Caco-2 (cell line): ENCODE measurements at regions of chr17 and their contacts with region 1.

Region 1: GRCh38 chr17:57892146-57892828 is 42.4 kb upstream of the MRPS23 start:
- DNase-seq: peak; percentile 89 to 93
- H3K4me3 ChIP-seq: no peak overlapping the region
- H3K4me3 Mint-ChIP-seq: peak overlapping the region; percentile 52
- H3K27ac Mint-ChIP-seq: peak overlapping the region; percentile 90
- H3K4me1 ChIP-seq: peaks cover 24% of the 10 kb centered on the region
- H3K4me1 Mint-ChIP-seq: peaks cover 21% of the 10 kb centered on the region
- H3K27me3 ChIP-seq: no peaks in the 10 kb centered on the region
- H3K27me3 Mint-ChIP-seq: no peaks in the 10 kb centered on the region
- CTCF ChIP-seq: peak; percentile 95 to 98

Region 2: GRCh38 chr17:57861000-57861789 is 31.1 kb before region 1 on chr17:
- CTCF ChIA-PET with region 1: interaction called, 14 read pairs
- POLR2A ChIA-PET with region 1: no interaction called
- intact Hi-C with region 1: no loop called
- DNase-seq: peak; percentile 76 to 79
- H3K4me3 ChIP-seq: peak overlapping the region; percentile 38
- H3K4me3 Mint-ChIP-seq: peak overlapping the region; percentile 95
- H3K27ac Mint-ChIP-seq: peak overlapping the region; percentile 84
- H3K4me1 ChIP-seq: peaks cover 20% of the 10 kb centered on the region
- H3K4me1 Mint-ChIP-seq: peaks cover 29% of the 10 kb centered on the region
- H3K27me3 ChIP-seq: no peaks in the 10 kb centered on the region
- H3K27me3 Mint-ChIP-seq: no peaks in the 10 kb centered on the region
- CTCF ChIP-seq: no peak

Region 3: DNA sequence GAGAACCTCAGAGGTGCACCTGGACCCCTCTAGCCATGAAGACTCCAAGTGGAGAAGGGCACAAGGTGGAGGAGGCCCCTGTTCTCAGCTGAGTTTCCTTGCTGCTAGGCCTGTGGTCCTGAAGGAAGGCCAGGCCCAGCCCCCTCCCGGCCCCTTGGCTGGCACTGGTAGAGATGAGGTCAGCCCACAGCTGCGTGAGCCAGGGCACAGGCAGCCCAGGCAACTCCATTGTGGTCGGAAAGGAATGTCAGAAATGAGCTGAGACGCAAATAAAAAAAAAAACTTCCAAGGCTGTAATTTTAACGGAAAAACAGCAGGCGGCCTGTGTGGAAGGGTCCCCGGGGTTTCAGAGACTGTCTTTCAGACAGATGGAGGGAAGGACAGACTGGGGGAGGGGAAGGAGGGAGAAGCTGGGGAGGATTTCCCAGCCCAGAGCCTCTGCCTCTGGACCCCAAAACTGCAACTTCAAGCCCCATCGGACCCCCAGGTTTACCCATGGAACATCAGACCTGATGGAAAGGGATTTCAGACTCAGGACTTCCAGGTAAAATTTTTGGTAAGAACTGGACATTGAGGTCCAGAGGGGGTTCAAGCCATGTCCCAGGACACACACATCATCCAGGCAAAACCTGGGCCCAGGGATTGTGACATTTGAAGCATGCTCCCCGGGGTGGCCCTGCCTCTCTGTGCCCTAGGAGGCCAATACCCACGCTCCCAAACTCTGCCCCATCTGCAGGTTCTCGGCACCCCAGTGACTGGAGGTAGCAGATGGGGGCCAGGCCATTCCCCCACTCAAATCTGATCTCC is 16.8 kb before region 1 on chr17:
- CTCF ChIA-PET with region 1: interaction called, 10 read pairs
- POLR2A ChIA-PET with region 1: interaction called, 4 read pairs
- intact Hi-C with region 1: loop called (anchors 1 kb)
- DNase-seq: peak; percentile 72 to 76
- H3K4me3 ChIP-seq: no peak overlapping the region
- H3K4me3 Mint-ChIP-seq: no peak overlapping the region
- H3K27ac Mint-ChIP-seq: peak overlapping the region; percentile 89
- H3K4me1 ChIP-seq: peaks cover 34% of the 10 kb centered on the region
- H3K4me1 Mint-ChIP-seq: peaks cover 36% of the 10 kb centered on the region
- H3K27me3 ChIP-seq: no peaks in the 10 kb centered on the region
- H3K27me3 Mint-ChIP-seq: no peaks in the 10 kb centered on the region
- CTCF ChIP-seq: peak; percentile 33 to 36

Region 4: GRCh38 chr17:57902800-57903759 is 10.8 kb after region 1 on chr17:
- CTCF ChIA-PET with region 1: interaction called, 16 read pairs
- POLR2A ChIA-PET with region 1: interaction called, 12 read pairs
- intact Hi-C with region 1: loop called (anchors 1 kb)
- DNase-seq: peak; percentile 89 to 92
- H3K4me3 ChIP-seq: no peak overlapping the region
- H3K4me3 Mint-ChIP-seq: peak overlapping the region; percentile 49
- H3K27ac Mint-ChIP-seq: peak overlapping the region; percentile 87
- H3K4me1 ChIP-seq: peaks cover 74% of the 10 kb centered on the region
- H3K4me1 Mint-ChIP-seq: peaks cover 52% of the 10 kb centered on the region
- H3K27me3 ChIP-seq: no peaks in the 10 kb centered on the region
- H3K27me3 Mint-ChIP-seq: no peaks in the 10 kb centered on the region
- CTCF ChIP-seq: no peak

Region 5: GRCh38 chr17:57939797-57940196 is 47.5 kb after region 1 on chr17:
- CTCF ChIA-PET with region 1: interaction called, 8 read pairs
- POLR2A ChIA-PET with region 1: no interaction called
- intact Hi-C with region 1: loop called (anchors 2 kb)
- DNase-seq: no peak
- H3K4me3 ChIP-seq: no peak overlapping the region
- H3K4me3 Mint-ChIP-seq: no peak overlapping the region
- H3K27ac Mint-ChIP-seq: no peak overlapping the region
- H3K4me1 ChIP-seq: peaks cover 26% of the 10 kb centered on the region
- H3K4me1 Mint-ChIP-seq: peaks cover 49% of the 10 kb centered on the region
- H3K27me3 ChIP-seq: no peaks in the 10 kb centered on the region
- H3K27me3 Mint-ChIP-seq: no peaks in the 10 kb centered on the region
- CTCF ChIP-seq: no peak

Region 6: DNA sequence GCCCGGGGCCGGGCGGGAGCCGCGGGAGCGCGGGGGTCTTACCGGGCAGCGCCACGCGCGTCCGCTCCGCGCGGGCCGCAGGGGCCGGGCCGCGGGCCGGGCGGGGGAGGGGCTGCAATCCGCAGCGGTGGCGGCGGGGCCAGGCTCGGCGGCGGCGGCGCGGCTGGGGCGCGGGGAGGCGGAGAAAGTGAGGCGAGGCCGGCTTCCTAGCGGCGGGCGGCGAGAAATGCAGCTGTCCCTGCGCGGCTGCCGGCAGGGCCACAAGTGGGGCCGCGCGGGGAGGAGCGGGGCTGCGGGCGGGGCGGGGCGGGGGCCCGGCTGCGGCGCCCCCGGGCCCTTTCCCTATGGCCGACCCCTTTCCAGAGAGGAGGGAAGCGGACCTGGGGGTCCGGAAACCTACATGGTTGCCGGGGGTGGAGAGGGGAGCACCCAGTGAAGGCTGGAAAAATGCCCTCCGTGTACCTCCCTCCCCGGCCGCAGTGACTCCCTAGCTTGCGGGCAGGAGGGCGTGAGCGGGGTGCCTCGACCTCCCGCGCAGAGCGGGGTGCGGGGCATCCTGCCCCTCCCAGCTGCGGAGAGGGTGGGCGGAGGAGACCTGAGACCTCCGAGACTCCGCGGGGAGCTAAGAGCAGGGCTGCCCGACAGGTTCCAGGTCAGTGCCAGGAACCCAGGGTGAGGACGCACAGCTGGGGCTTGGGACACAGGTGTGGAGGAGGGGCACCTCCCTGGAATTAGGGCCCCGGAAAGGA is 63.1 kb after region 1 on chr17 and contains the start of gene CUEDC1:
- CTCF ChIA-PET with region 1: interaction called, 10 read pairs
- POLR2A ChIA-PET with region 1: interaction called, 9 read pairs
- intact Hi-C with region 1: loop called (anchors 2 kb)
- DNase-seq: peak; percentile 76 to 90
- H3K4me3 ChIP-seq: peak within 1 kb of the TSS; percentile 69
- H3K4me3 Mint-ChIP-seq: peak within 1 kb of the TSS; percentile 72
- H3K27ac Mint-ChIP-seq: peak within 1 kb of the TSS; percentile 53
- H3K4me1 ChIP-seq: peaks cover 47% of the 10 kb centered on the region
- H3K4me1 Mint-ChIP-seq: peaks cover 36% of the 10 kb centered on the region
- H3K27me3 ChIP-seq: no peaks in the 10 kb centered on the region
- H3K27me3 Mint-ChIP-seq: no peaks in the 10 kb centered on the region
- CTCF ChIP-seq: peak; percentile 22 to 40
- total RNA-seq, gene CUEDC1: 27.5 TPM in 2 replicates

Region 7: GRCh38 chr17:57995076-57995956 is 103.0 kb after region 1 on chr17:
- CTCF ChIA-PET with region 1: interaction called, 13 read pairs
- POLR2A ChIA-PET with region 1: no interaction called
- intact Hi-C with region 1: loop called (anchors 1 kb)
- DNase-seq: peak; percentile 77 to 80
- H3K4me3 ChIP-seq: no peak overlapping the region
- H3K4me3 Mint-ChIP-seq: no peak overlapping the region
- H3K27ac Mint-ChIP-seq: peak overlapping the region; percentile 12
- H3K4me1 ChIP-seq: peaks cover 31% of the 10 kb centered on the region
- H3K4me1 Mint-ChIP-seq: peaks cover 28% of the 10 kb centered on the region
- H3K27me3 ChIP-seq: no peaks in the 10 kb centered on the region
- H3K27me3 Mint-ChIP-seq: no peaks in the 10 kb centered on the region
- CTCF ChIP-seq: peak; percentile 77 to 83

Region 8: GRCh38 chr17:58066401-58066800 is 174.1 kb after region 1 on chr17:
- CTCF ChIA-PET with region 1: no interaction called
- POLR2A ChIA-PET with region 1: no interaction called
- intact Hi-C with region 1: no loop called
- DNase-seq: no peak
- H3K4me3 ChIP-seq: no peak overlapping the region
- H3K4me3 Mint-ChIP-seq: no peak overlapping the region
- H3K27ac Mint-ChIP-seq: no peak overlapping the region
- H3K4me1 ChIP-seq: no peaks in the 10 kb centered on the region
- H3K4me1 Mint-ChIP-seq: no peaks in the 10 kb centered on the region
- H3K27me3 ChIP-seq: no peaks in the 10 kb centered on the region; the same call in 1 of the 2 replicates
- H3K27me3 Mint-ChIP-seq: peaks cover 6% of the 10 kb centered on the region
- CTCF ChIP-seq: no peak